ENCODE measurements at regions of chr21 and their contacts with region 1.

Region 1: DNA sequence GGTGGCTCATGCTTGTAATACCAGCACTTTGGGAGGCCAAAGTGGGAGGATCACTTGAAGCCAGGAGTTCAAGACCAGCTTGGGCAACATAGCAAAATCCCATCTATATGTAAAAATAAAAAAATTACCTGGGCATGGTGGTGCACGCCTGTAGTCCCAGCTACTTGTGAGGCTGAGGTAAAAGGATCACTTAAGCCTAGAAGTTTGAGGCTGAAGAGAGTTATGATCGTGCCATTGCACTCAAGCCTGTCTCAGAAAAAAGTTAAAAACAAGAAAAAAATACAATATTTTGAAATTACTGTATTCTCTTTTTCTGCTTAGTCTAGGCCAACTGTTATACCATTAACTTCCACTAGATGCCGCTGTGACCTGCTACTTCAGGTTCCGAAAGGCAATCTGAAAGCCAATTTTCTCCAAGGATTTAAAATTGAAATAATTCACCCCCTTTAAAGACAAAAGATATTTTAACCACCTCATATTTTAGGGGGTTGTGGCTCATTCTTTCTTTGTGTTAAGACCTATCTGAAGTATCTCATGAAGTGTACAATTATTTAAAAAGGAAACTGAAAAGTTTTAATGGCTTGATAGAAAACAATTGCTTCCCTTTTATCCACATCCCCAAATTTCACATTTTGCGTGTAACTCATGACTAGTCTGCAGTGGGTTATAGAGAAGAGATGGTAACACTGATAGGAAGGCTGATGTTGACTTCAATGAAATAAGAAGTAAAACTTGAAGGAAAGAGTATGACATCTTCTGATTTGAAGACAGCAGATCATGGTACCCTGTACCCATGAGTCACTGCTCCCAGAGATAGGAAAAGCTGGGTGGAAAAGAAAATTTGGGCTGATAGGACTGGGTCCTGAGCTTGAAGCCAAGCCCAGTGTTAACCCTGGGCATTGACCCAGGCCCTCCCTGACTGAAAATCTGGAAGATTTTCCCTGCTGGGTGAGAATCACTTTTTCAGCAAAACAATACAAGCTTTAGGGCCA is 24.4 kb upstream of the CLDN14 start:
- DNase-seq: peak in 4 of 10 donors; percentile 24 to 51 (median 42)

Region 2: DNA sequence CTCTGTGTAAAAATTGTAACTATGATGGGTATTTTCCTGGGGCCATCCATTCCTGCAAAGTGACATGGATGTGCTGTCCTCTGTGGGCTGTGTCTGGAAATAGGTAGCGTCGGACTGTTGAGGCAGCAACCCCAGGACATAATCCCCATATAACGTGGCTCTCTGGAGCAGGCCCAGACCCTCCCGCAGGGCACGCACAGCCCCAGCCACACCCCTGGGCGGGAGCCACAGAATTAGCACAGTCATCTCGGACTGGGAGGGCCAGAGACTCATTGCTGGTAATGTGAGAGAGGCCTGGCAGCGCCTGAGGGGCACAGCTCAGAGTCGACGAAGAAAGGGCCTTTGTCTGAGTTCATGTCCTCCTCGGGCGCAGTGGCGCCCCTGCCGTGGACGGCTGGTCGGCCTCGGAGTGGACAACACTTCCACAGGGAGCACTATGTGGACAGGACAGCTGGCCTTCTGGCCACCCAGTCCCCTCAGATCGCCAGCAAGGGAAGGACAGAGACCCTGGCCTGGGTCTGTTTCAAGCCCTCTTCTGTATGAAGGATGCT is 214.7 kb after region 1 on chr21:
- intact Hi-C with region 1: loop called (anchors 10 kb)
- DNase-seq: peak; percentile 40 to 96 (median 74)

Region 3: DNA sequence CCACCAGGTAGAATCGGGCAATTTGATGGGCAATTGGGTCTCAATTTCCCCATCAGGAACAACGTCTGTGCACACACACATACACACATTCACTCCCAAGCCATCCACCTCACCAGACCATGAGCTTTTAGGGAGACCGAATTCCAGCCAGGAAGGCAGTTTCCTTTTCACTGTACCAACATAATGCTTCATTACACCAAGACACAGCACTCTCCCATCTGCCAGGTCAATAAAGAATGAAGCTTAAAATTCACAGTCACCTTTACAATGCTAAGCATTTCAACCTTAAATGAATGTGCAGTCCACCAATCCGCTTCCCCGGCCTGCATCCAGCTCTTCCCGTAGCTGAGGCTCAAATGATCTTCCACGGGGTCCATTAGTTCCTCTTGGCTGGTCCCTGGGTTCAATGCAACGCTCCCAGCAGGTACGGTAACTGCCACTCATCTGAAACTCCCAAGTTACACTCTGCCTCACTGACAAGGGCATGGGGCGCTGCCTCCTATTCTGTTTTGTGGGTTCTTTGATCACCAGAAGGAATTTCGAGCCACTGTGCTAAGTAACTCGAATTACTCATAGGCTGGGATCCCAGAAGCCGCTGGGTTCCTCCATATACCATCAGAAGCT is 299.6 kb after region 1 on chr21:
- intact Hi-C with region 1: no loop called
- DNase-seq: no peak

Measured in posterior cingulate gyrus (tissue), 11 donors.